ENCODE measurements at regions of chr3 and their contacts with region 1.

Region 1: DNA sequence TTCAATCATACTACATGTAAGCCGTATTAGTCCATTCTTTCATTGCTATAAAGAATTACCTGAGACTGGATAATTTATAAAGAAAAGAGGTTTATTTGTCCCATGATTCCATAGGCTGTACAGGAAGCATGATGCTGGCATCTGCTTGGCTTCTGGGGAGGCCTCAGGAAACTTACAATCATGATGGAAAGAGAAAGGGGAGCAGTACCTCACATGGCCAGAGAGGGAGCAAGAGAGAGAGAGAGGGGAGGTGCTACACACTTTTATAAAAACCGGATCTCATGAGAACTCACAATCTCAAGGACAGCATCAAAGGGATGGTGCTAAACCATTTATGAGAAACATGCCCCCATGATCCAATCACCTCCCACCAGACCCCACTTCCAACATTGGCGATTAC is 14.3 kb upstream of the CLASP2 start:
- DNase-seq: no peak
- H3K4me3 ChIP-seq: no peak overlapping the region
- H3K27ac ChIP-seq: no peak overlapping the region
- H3K27me3 ChIP-seq: no peaks in the 10 kb centered on the region
- CTCF ChIP-seq: peak in 4 of 56 donors; percentile 12 to 28 (median 22)

Region 2: GRCh38 chr3:33773637-33774036 is 41.2 kb after region 1 on chr3:
- intact Hi-C with region 1: loop called in 1 of 2 experiments (anchors 5 kb)
- DNase-seq: no peak
- H3K4me3 ChIP-seq: no peak overlapping the region
- H3K27ac ChIP-seq: no peak overlapping the region
- H3K27me3 ChIP-seq: no peaks in the 10 kb centered on the region
- CTCF ChIP-seq: no peak